CD4-positive, alpha-beta T cell (primary cell): ENCODE measurements at regions of chr17 and their contacts with region 1.

Region 1: DNA sequence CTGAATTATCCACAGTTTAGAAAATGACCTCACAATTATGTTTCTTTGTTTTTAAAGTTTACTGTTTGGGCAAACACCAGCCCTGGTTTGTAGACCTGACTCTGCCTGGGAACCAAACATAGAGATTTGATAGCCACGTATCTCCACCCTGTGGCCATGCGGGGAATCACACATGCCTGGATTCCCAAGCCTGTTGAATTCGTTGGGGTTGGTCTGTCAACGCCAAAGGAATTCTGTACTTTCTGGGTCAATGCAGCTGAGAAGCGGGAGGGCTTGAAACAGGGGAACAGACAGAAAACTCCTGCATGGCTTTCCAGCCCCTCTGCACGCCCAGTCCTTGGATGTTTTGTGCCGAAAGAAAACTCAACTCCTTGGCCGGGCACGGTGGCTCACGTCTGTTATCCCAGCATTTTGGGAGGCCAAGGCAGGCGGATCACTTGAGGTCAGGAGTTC is 27.0 kb downstream of the CD300A start:
- DNase-seq: peak; percentile 48 to 83 (median 66)
- ATAC-seq: peak; percentile 78
- H3K4me3 ChIP-seq: no peak overlapping the region
- H3K4me3 Mint-ChIP-seq: no peak overlapping the region
- H3K27ac ChIP-seq: no peak overlapping the region
- H3K27ac Mint-ChIP-seq: no peak overlapping the region
- H3K4me1 ChIP-seq: peaks cover 3% of the 10 kb centered on the region
- H3K4me1 Mint-ChIP-seq: peaks cover 7% of the 10 kb centered on the region
- H3K27me3 ChIP-seq: peaks cover 0 to 3% of the 10 kb centered on the region in 2 experiments
- H3K27me3 Mint-ChIP-seq: peaks cover 6% of the 10 kb centered on the region
- CTCF ChIP-seq: peak; percentile 90

Region 2: DNA sequence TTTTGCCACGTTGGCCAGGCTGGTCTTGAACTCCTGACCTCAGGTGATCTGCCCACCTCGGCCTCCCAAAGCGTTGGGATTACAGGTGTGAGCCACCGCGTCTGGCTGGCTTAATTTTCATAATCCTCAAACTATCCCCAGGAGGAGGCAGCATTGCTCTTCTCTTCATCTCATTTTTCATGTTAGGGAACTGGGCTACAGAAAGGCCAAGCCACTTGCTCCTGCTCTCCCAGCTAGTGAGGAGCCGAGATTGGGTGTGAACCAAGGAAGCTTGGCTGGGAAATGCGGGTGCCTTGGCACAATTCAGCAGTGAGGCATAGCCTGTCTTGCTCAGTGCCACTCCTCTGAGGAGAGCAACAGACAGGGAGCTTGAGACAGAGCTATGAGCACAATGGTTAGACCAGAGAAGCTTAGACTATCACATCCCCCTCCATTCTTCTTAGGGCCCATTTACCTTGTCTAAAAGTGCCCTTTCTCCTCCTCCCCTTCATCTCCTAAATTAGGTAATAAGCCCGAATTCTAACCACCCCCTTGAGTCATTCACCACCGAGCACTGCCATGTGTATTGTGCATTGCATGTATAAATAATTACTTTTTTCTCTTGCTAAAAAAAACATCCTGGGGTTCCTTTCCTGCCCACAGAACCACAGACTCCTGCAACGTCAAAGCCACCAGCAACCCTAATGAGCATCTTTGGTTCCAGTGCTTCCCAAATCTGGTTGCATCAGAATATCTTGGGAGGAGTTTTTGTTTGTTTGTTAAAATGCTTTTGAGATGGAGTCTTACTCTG is 187.3 kb before region 1 on chr17:
- CTCF ChIA-PET with region 1: no interaction called
- POLR2A ChIA-PET with region 1: no interaction called
- intact Hi-C with region 1: loop called in 1 of 2 experiments (anchors 10 kb)
- DNase-seq: no peak
- ATAC-seq: no peak
- H3K4me3 ChIP-seq: no peak overlapping the region
- H3K4me3 Mint-ChIP-seq: no peak overlapping the region
- H3K27ac ChIP-seq: no peak overlapping the region
- H3K27ac Mint-ChIP-seq: no peak overlapping the region
- H3K4me1 ChIP-seq: peaks cover 10% of the 10 kb centered on the region
- H3K4me1 Mint-ChIP-seq: peaks cover 6% of the 10 kb centered on the region
- H3K27me3 ChIP-seq: no peaks in the 10 kb centered on the region
- H3K27me3 Mint-ChIP-seq: no peaks in the 10 kb centered on the region
- CTCF ChIP-seq: no peak

Region 3: DNA sequence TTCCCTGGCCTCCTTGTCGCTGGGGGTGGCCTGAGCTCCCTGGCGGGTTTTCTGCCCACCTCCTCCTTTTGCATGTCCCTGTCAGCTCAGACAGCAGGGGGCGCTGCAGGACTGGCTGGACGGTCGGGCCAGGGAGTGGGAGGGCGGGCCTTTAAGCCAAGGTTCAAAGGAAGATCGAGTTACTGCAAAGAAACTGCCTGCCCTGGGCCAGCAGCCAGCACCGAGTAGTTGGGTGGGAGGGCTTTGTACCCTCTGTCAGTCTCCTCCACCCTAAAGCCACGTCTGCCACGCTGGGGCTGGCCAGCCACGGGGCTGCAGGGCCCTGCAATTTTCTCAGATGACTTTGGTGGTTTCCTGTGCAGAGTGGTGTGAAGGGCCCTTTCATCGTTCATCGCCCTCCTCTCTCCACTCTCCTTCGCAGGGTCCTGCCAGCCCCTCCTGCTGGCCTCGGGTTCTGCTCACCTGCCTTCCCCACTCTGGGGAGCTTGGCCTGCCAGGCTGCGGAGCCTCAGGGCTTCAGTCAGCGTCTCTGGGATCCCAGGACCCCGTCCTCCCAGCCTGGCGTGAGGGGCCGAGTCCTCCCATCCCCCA is 113.8 kb before region 1 on chr17:
- CTCF ChIA-PET with region 1: interaction called, 7 read pairs
- POLR2A ChIA-PET with region 1: interaction called, 3 read pairs
- intact Hi-C with region 1: loop called (anchors 1 kb)
- DNase-seq: peak; percentile 84 to 95 (median 90)
- ATAC-seq: peak; percentile 92
- H3K4me3 ChIP-seq: peak overlapping the region; percentile 16
- H3K4me3 Mint-ChIP-seq: no peak overlapping the region
- H3K27ac ChIP-seq: no peak overlapping the region
- H3K27ac Mint-ChIP-seq: no peak overlapping the region
- H3K4me1 ChIP-seq: peaks cover 13% of the 10 kb centered on the region
- H3K4me1 Mint-ChIP-seq: no peaks in the 10 kb centered on the region
- H3K27me3 ChIP-seq: no peaks in the 10 kb centered on the region
- H3K27me3 Mint-ChIP-seq: no peaks in the 10 kb centered on the region
- CTCF ChIP-seq: peak; percentile 87

Region 4: GRCh38 chr17:74437702-74438101 is 55.7 kb before region 1 on chr17:
- CTCF ChIA-PET with region 1: no interaction called
- POLR2A ChIA-PET with region 1: no interaction called
- intact Hi-C with region 1: loop called in 1 of 2 experiments (anchors 5 kb)
- DNase-seq: peak in 1 of 14 experiments; percentile 38
- ATAC-seq: no peak
- H3K4me3 ChIP-seq: no peak overlapping the region
- H3K4me3 Mint-ChIP-seq: no peak overlapping the region
- H3K27ac ChIP-seq: no peak overlapping the region
- H3K27ac Mint-ChIP-seq: no peak overlapping the region
- H3K4me1 ChIP-seq: peaks cover 6% of the 10 kb centered on the region
- H3K4me1 Mint-ChIP-seq: no peaks in the 10 kb centered on the region
- H3K27me3 ChIP-seq: peaks cover 15 to 18% of the 10 kb centered on the region in 2 experiments
- H3K27me3 Mint-ChIP-seq: peaks cover 48% of the 10 kb centered on the region
- CTCF ChIP-seq: peak; percentile 49

Region 5: DNA sequence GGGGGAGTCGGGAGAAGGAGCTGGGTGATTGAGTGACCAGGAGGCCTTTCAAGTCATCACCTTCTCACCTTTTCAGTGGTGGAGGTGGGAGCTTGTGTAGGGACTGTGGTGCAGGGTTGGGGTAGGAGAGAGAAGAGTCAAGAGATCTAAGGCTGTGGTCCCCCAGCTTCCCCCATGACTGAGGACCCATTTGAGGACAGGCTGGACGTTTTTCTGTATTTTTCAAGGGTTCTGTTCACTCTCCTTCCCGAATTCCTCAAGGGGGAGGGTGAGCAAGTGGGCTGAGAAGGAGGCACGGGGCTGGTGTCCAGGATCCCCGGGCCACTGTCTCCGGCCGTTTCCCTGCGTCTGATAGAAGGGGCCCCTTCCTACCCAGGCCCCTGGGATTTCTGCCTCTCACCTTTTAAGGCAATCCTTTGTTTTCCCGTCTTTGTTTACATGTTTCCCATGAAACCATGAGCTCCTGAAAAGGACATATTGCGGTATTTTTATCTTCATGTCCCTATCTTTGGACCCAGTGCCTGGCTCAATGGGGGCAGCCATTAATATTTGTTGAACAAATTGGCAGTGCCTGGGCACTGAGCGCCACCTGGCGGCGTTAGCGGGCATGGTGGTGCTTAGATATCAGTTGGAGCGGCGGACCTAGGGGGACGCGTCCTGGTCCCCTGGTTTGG is 36.1 kb before region 1 on chr17:
- CTCF ChIA-PET with region 1: no interaction called
- POLR2A ChIA-PET with region 1: interaction called, 4 read pairs
- intact Hi-C with region 1: loop called (anchors 1 to 2 kb)
- DNase-seq: peak; percentile 45 to 86 (median 67)
- ATAC-seq: peak; percentile 60
- H3K4me3 ChIP-seq: no peak overlapping the region
- H3K4me3 Mint-ChIP-seq: peak overlapping the region; percentile 51
- H3K27ac ChIP-seq: no peak overlapping the region
- H3K27ac Mint-ChIP-seq: no peak overlapping the region
- H3K4me1 ChIP-seq: peaks cover 68% of the 10 kb centered on the region
- H3K4me1 Mint-ChIP-seq: peaks cover 27% of the 10 kb centered on the region
- H3K27me3 ChIP-seq: peaks cover 0 to 3% of the 10 kb centered on the region in 2 experiments
- H3K27me3 Mint-ChIP-seq: peaks cover 6% of the 10 kb centered on the region
- CTCF ChIP-seq: peak; percentile 83

Region 6: DNA sequence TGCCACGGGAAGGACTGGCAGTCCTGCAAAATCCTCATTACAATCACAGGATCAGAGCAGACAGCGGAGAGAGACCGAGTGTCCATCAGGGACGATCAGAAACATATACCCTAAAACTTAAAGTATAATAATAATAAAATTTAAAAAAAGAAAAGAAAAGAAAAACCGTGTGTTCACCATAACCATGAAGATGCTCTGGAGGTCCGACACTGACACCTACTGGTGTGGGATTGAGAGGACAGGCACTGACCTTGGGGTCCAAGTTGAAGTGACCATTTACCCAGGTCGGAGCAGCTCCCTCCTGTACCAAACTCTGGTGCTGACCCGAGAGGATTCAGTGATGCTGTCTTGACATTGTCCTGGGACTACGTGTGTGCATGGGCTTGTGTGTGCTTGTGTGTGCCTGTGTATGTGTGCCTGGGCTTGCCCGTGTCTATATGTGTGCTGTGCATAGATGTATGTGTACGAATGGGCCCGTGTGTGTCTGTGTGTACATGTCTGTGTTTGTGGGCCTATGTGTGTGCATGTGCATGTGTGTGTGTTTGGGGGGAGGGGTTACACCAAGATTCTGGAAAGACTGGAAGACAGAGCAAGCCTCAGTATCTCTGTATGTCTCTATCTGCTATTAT is 108.7 kb after region 1 on chr17:
- CTCF ChIA-PET with region 1: no interaction called
- POLR2A ChIA-PET with region 1: no interaction called
- intact Hi-C with region 1: loop called in 1 of 2 experiments (anchors 5 kb)
- DNase-seq: peak in 8 of 14 experiments; percentile 6 to 57 (median 22)
- ATAC-seq: no peak
- H3K4me3 ChIP-seq: no peak overlapping the region
- H3K4me3 Mint-ChIP-seq: no peak overlapping the region
- H3K27ac ChIP-seq: no peak overlapping the region
- H3K27ac Mint-ChIP-seq: no peak overlapping the region
- H3K4me1 ChIP-seq: peaks cover 17% of the 10 kb centered on the region
- H3K4me1 Mint-ChIP-seq: peaks cover 41% of the 10 kb centered on the region
- H3K27me3 ChIP-seq: peaks cover 0 to 13% of the 10 kb centered on the region in 2 experiments
- H3K27me3 Mint-ChIP-seq: peaks cover 9% of the 10 kb centered on the region
- CTCF ChIP-seq: peak; percentile 71